ENCODE measurements at regions of chr4 and their contacts with region 1.

Region 1: GRCh38 chr4:6709230-6710114 is at the start of gene MRFAP1L1:
- DNase-seq: peak; percentile 96
- H3K4me3 ChIP-seq: peak within 1 kb of the TSS; percentile 69
- H3K27ac ChIP-seq: peak within 1 kb of the TSS; percentile 86
- H3K4me1 ChIP-seq: no peaks in the 10 kb centered on the region
- H3K27me3 ChIP-seq: no peaks in the 10 kb centered on the region
- CTCF ChIP-seq: no peak
- POLR2A ChIP-seq: peak; percentile 51
- total RNA-seq, gene MRFAP1L1: 65.2 to 81.9 TPM

Region 2: GRCh38 chr4:6640292-6641163 is 68.9 kb before region 1 on chr4 and contains the start of gene MRFAP1:
- intact Hi-C with region 1: loop called (anchors 1 kb)
- DNase-seq: peak; percentile 95
- H3K4me3 ChIP-seq: peak within 1 kb of the TSS; percentile 61 to 80
- H3K27ac ChIP-seq: peak within 1 kb of the TSS; percentile 91 to 94
- H3K4me1 ChIP-seq: peaks cover 9% of the 10 kb centered on the region
- H3K27me3 ChIP-seq: no peaks in the 10 kb centered on the region
- CTCF ChIP-seq: peak in 1 of 4 experiments; percentile 2
- POLR2A ChIP-seq: peak; percentile 70
- total RNA-seq, gene MRFAP1: 256 to 298 TPM

Region 3: GRCh38 chr4:6673660-6674499 is 35.6 kb before region 1 on chr4:
- intact Hi-C with region 1: loop called (anchors 5 kb)
- DNase-seq: peak; percentile 93
- H3K4me3 ChIP-seq: peak overlapping the region; percentile 49 to 76
- H3K27ac ChIP-seq: peak overlapping the region; percentile 85 to 86
- H3K4me1 ChIP-seq: peaks cover 22% of the 10 kb centered on the region
- H3K27me3 ChIP-seq: no peaks in the 10 kb centered on the region
- CTCF ChIP-seq: peak in 3 of 4 experiments; percentile 15 to 54 (median 29)
- POLR2A ChIP-seq: peak; percentile 81

Region 4: GRCh38 chr4:6986781-6987587 is 277.5 kb after region 1 on chr4:
- intact Hi-C with region 1: loop called (anchors 10 kb)
- DNase-seq: peak; percentile 96
- H3K4me3 ChIP-seq: peak overlapping the region; percentile 54 to 74
- H3K27ac ChIP-seq: peak overlapping the region; percentile 93 to 96
- H3K4me1 ChIP-seq: peaks cover 15% of the 10 kb centered on the region
- H3K27me3 ChIP-seq: no peaks in the 10 kb centered on the region
- CTCF ChIP-seq: peak in 1 of 4 experiments; percentile 28
- POLR2A ChIP-seq: peak; percentile 68

Measured in prostate gland (tissue), 2 donors.